Activated CD8-positive, alpha-beta T cell treated with anti-CD3 and anti-CD28 coated beads for 36 hours (primary cell): ENCODE measurements at regions of chr2 and their contacts with region 1.

Region 1: GRCh38 chr2:227238238-227239237 is 74.1 kb downstream of the COL4A3 start:
- DNase-seq: peak; percentile 79
- ATAC-seq: no peak
- H3K4me3 Mint-ChIP-seq: no peak overlapping the region
- H3K27ac Mint-ChIP-seq: no peak overlapping the region
- H3K4me1 Mint-ChIP-seq: no peaks in the 10 kb centered on the region
- H3K27me3 Mint-ChIP-seq: peaks cover 8% of the 10 kb centered on the region
- CTCF ChIP-seq: peak; percentile 87

Region 2: GRCh38 chr2:227125506-227125905 is 113.0 kb before region 1 on chr2:
- CTCF ChIA-PET with region 1: interaction called, 87 read pairs
- POLR2A ChIA-PET with region 1: no interaction called
- intact Hi-C with region 1: loop called (anchors 2 kb)
- DNase-seq: peak; percentile 5
- ATAC-seq: no peak
- H3K4me3 Mint-ChIP-seq: no peak overlapping the region
- H3K27ac Mint-ChIP-seq: no peak overlapping the region
- H3K4me1 Mint-ChIP-seq: no peaks in the 10 kb centered on the region
- H3K27me3 Mint-ChIP-seq: peaks cover 10% of the 10 kb centered on the region
- CTCF ChIP-seq: no peak

Region 3: DNA sequence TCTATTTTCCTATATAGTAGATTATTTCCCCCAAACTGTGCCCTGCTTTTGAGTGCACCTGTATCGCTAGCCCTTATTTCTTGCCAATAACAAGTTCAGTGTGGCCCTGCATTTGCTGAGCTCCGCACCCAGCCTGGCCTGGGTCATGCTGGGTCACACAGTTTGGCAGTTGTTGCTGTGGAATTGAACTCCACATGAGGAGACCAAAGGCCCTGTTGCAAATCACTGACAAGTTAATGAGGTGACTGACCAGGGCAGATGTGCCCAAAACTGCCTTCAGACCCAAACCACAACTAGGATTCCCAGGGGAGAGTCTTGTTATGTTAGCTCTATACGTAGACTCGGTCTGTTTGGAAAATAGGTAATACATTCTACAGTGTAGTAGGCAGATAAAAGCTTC is 105.6 kb before region 1 on chr2:
- CTCF ChIA-PET with region 1: interaction called, 87 read pairs
- POLR2A ChIA-PET with region 1: no interaction called
- intact Hi-C with region 1: loop called (anchors 2 kb)
- DNase-seq: no peak
- ATAC-seq: no peak
- H3K4me3 Mint-ChIP-seq: no peak overlapping the region
- H3K27ac Mint-ChIP-seq: no peak overlapping the region
- H3K4me1 Mint-ChIP-seq: no peaks in the 10 kb centered on the region
- H3K27me3 Mint-ChIP-seq: peaks cover 6% of the 10 kb centered on the region
- CTCF ChIP-seq: no peak

Region 4: GRCh38 chr2:227204452-227204851 is 34.1 kb before region 1 on chr2:
- CTCF ChIA-PET with region 1: interaction called, 11 read pairs
- POLR2A ChIA-PET with region 1: no interaction called
- intact Hi-C with region 1: no loop called
- DNase-seq: no peak
- ATAC-seq: no peak
- H3K4me3 Mint-ChIP-seq: no peak overlapping the region
- H3K27ac Mint-ChIP-seq: no peak overlapping the region
- H3K4me1 Mint-ChIP-seq: no peaks in the 10 kb centered on the region
- H3K27me3 Mint-ChIP-seq: peaks cover 18% of the 10 kb centered on the region
- CTCF ChIP-seq: no peak

Region 5: GRCh38 chr2:227219312-227220105 is 19.0 kb before region 1 on chr2:
- CTCF ChIA-PET with region 1: interaction called, 20 read pairs
- POLR2A ChIA-PET with region 1: no interaction called
- intact Hi-C with region 1: no loop called
- DNase-seq: no peak
- ATAC-seq: no peak
- H3K4me3 Mint-ChIP-seq: no peak overlapping the region
- H3K27ac Mint-ChIP-seq: no peak overlapping the region
- H3K4me1 Mint-ChIP-seq: no peaks in the 10 kb centered on the region
- H3K27me3 Mint-ChIP-seq: no peaks in the 10 kb centered on the region
- CTCF ChIP-seq: no peak

Region 6: GRCh38 chr2:227248876-227249275 is 10.3 kb after region 1 on chr2:
- CTCF ChIA-PET with region 1: interaction called, 13 read pairs
- POLR2A ChIA-PET with region 1: no interaction called
- intact Hi-C with region 1: no loop called
- DNase-seq: no peak
- ATAC-seq: no peak
- H3K4me3 Mint-ChIP-seq: no peak overlapping the region
- H3K27ac Mint-ChIP-seq: no peak overlapping the region
- H3K4me1 Mint-ChIP-seq: no peaks in the 10 kb centered on the region
- H3K27me3 Mint-ChIP-seq: no peaks in the 10 kb centered on the region
- CTCF ChIP-seq: no peak

Region 7: DNA sequence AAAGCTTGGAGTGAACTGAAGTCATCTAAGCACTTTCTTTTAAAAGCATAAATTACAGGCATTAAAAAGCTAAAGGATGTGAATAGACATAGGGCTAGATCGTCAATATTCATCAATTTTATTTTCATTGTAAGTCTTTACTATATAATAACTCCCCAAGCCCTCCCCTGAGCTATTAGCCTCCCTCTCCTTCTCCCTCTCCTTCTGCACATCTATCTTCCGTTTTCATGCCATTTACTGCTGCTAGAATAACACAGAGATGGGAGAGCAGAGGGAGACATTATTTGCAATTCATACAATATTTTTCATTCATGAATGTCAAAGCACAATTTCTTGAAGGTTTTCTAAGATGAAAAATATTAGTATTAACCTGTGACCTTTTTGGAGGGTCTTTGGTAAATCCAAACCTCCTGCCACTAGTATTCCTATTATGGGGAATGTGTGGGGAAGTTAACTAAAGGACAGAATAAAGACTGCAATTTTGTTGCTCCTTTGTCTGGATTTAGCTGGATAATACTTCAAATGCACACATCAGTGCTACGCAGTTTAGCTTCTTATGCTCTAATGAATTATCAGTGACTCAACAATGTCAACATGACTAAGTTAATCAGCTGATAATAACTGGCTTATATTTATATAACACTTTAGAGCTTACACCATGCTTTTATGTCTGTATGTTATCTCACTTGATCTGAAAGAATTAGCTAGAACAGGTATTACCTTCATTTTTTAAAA is 58.3 kb after region 1 on chr2:
- CTCF ChIA-PET with region 1: interaction called, 11 read pairs
- POLR2A ChIA-PET with region 1: no interaction called
- intact Hi-C with region 1: no loop called
- DNase-seq: no peak
- ATAC-seq: no peak
- H3K4me3 Mint-ChIP-seq: no peak overlapping the region
- H3K27ac Mint-ChIP-seq: no peak overlapping the region
- H3K4me1 Mint-ChIP-seq: peaks cover 4% of the 10 kb centered on the region
- H3K27me3 Mint-ChIP-seq: no peaks in the 10 kb centered on the region
- CTCF ChIP-seq: no peak